Calu3 (cell line): ENCODE measurements at regions of chr4 and their contacts with region 1.

Region 1: DNA sequence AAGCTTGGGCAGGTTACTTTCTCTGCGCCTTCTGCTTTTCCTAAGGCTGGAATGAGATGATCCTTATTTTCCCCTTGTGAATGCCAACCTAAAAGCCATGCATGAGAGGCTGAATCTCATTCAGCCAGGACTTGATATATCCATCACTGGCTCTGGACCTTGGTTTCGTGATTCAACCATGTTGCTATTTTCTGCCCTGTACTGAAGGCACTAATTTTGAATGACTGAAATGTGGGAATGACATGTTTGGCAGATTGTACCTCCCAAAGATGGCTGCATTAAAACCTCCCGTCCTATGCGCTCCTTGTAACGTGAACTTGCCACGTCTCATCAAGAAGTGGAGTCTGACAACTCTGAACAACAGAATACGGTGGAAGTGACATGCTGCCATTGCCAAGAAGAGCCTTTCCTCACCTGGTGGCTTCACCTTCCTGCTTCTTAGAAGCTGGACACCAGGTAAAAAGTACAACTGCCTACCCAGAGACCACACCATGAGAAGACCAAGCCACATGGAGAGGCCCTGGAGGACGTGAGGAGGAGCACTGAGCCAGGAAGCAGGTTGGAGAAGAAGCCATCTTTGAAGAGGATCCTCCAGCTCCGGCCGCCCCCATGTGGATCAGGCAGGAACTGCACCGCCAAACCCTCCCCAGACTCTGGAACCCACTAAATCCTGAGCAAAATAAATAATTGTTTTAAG is 174.5 kb downstream of the NSUN7 start:
- DNase-seq: peak; percentile 77
- H3K4me3 Mint-ChIP-seq: no peak overlapping the region
- H3K27ac Mint-ChIP-seq: no peak overlapping the region
- H3K4me1 Mint-ChIP-seq: no peaks in the 10 kb centered on the region
- H3K27me3 Mint-ChIP-seq: no peaks in the 10 kb centered on the region
- CTCF ChIP-seq: peak; percentile 74

Region 2: DNA sequence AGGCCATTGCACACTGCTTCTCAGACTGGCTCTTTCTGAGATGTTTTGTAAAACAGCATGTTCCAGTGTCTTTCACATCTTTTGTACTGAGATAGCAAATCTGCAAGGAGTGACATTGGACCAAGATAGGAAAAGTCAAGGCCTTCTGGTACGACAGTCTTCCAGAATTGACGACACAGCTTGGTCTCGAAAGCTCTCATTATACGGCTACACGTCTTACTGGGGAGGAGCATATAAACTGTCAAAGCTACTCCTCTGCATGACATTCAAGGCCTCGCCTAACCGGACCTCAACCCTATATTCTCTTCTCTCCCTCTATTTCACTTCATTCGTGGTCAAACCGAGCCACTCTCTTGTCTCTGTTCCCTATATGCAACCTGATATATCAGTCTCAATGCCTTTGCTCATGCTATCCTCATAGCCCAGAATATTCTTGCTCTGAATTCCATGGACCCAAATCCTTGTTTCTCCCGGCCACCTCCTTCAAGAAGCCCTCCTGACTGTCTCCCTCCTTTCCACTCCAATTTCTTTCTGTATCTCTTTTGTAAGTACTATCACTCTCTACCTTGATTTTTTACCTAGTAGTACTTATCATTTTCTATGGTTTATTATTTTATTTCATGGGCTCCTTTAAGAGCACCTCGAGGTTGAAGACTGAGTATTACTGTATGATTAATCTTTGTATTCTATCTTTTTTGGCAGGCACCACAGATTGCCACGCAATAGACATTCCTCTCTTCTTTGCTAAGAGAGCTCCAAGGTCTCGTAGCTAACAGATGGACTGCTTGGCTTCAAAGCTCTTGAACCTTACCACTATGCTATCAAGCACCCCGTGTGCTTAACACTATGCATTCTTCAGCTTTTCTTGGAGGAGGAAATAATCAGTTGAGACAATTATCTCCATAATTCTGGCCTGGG is 329.7 kb before region 1 on chr4:
- CTCF ChIA-PET with region 1: no interaction called
- intact Hi-C with region 1: no loop called
- DNase-seq: no peak
- H3K4me3 Mint-ChIP-seq: no peak overlapping the region
- H3K27ac Mint-ChIP-seq: peak overlapping the region; percentile 10
- H3K4me1 Mint-ChIP-seq: peaks cover 9% of the 10 kb centered on the region
- H3K27me3 Mint-ChIP-seq: no peaks in the 10 kb centered on the region
- CTCF ChIP-seq: no peak

Region 3: DNA sequence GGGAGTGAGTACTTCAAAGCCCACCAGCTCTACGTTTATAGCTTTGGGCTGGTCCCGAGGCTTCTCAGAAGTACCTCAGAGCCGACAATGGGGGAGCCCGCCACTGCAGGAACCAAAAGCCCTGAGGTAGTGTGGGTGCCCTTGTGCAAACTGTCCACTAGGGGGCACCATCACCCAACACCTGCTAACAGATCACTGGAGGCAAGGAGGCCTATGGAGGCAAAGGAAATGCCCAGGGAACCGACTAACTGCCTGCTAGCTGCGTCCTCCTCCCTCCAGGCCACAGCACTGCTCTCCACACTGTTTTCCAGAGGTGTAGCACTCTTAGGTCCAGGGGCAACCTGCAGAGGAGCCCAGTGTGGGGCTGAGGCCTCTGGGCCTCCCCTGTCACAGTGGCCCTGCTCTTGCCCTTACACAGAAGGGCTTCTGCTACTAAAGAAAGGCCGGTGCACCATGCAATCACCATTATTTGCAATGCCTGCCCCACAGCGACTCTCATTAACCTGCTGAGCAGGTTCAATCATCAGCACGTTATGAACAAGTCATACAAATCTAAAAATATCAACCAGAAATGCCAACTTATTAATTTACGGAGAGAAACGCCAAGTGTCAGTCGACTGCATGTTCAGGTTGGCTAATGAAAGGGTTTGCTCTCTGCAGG is 15.4 kb before region 1 on chr4:
- CTCF ChIA-PET with region 1: interaction called, 10 read pairs
- intact Hi-C with region 1: no loop called
- DNase-seq: peak; percentile 83
- H3K4me3 Mint-ChIP-seq: peak overlapping the region; percentile 50
- H3K27ac Mint-ChIP-seq: peak overlapping the region; percentile 89
- H3K4me1 Mint-ChIP-seq: peaks cover 21% of the 10 kb centered on the region
- H3K27me3 Mint-ChIP-seq: no peaks in the 10 kb centered on the region
- CTCF ChIP-seq: peak; percentile 90

Region 4: DNA sequence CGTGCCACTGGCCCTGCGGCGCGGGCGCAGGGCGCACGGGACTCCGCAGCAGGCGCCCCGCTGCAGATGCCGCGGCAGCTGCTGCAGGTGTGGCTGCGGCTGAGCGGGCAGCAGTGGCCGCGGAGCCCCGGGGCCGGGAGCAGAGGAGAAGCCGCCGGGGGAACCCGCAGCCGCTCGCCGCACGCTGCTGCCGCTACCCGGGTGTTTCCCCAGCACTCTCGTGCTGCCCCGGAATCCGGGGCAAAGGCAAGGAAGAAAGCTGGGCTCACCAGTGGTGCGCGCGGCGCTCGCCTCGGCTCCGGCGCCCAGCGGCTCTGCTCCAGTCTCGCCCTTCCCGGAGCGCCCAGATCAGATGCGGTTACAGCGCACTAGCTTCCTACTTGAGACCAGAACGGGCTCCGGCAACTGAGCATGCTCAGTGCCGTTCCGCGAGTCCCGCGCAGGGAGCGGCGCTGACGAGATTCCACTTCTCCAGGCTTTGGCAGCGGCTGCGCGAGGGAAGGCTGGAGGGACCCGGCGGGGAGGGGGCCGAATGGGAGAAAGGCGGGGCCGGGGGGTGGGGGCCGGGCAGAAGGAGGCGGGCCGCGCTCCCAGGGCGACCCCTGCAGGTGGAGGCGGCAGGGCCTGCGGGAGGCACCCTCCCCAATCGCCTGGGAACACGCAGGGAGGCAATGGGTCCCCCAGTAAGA is 290.0 kb after region 1 on chr4 and contains the start of gene APBB2:
- CTCF ChIA-PET with region 1: interaction called, 3 read pairs
- intact Hi-C with region 1: loop called (anchors 1 kb)
- DNase-seq: peak; percentile 91
- H3K4me3 Mint-ChIP-seq: peak within 1 kb of the TSS; percentile 71
- H3K27ac Mint-ChIP-seq: peak within 1 kb of the TSS; percentile 97
- H3K4me1 Mint-ChIP-seq: peaks cover under 1% of the 10 kb centered on the region
- H3K27me3 Mint-ChIP-seq: no peaks in the 10 kb centered on the region
- CTCF ChIP-seq: peak; percentile 44
- total RNA-seq, gene APBB2: 15.5 and 17.7 TPM in 2 replicates

Region 5: DNA sequence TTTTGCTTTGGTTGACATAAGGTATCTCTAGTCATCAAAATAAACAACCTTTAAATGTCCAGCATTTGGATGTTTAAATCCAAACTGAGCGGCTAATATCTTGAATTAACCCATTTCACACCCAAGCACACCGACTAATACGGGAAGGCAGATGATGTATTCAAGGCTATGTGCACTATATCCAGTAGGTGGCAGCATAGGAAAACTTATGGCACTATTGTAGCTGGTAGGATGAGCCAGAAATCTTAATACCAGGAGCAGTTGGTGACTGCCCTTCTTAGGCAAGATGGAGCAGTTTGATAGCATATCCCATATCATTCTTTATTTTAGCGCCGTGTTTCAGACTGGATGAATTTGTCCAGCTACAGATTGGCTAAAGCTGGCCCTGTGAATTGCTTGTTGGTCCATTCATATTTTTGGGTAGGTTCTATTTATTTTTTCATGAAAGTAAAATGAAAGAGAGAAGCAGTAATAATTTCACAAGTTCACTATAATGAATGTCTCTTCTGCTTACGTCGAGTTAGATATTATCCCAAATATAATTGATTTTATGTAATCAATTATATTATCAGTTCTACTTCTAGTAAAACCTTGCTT is 356.9 kb after region 1 on chr4:
- CTCF ChIA-PET with region 1: no interaction called
- intact Hi-C with region 1: no loop called
- DNase-seq: peak; percentile 53
- H3K4me3 Mint-ChIP-seq: no peak overlapping the region
- H3K27ac Mint-ChIP-seq: no peak overlapping the region
- H3K4me1 Mint-ChIP-seq: peaks cover 13% of the 10 kb centered on the region
- H3K27me3 Mint-ChIP-seq: no peaks in the 10 kb centered on the region
- CTCF ChIP-seq: peak; percentile 37

Region 6: GRCh38 chr4:41882625-41883347 is 958.5 kb after region 1 on chr4:
- CTCF ChIA-PET with region 1: no interaction called
- intact Hi-C with region 1: no loop called
- DNase-seq: peak; percentile 49
- H3K4me3 Mint-ChIP-seq: peak overlapping the region; percentile 60
- H3K27ac Mint-ChIP-seq: no peak overlapping the region
- H3K4me1 Mint-ChIP-seq: no peaks in the 10 kb centered on the region
- H3K27me3 Mint-ChIP-seq: peaks cover 24% of the 10 kb centered on the region
- CTCF ChIP-seq: peak; percentile 70